ENCODE measurements at regions of chr6 and their contacts with region 1.

Region 1: DNA sequence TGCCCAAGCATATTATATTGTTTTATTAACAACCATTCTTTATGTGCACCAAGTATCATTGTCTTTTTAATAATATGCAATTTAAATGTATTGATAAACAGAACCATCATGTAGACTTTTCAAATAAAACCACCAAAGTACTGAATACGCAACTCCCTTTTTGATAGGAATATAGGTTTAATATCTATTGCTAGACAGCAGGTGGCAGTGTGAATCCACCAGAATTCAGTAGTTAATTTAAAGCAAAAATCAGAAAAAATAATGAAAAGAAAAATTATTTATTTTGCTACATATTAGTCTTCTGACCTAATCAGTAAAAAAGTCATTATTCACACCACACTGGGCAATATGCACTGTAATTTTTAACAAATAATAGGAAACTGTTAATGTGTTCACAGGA is 143.7 kb downstream of the KLHL32 start:
- DNase-seq: peak; percentile 49
- H3K4me3 Mint-ChIP-seq: no peak overlapping the region
- H3K27ac Mint-ChIP-seq: no peak overlapping the region
- H3K4me1 Mint-ChIP-seq: no peaks in the 10 kb centered on the region
- H3K27me3 Mint-ChIP-seq: no peaks in the 10 kb centered on the region

Region 2: DNA sequence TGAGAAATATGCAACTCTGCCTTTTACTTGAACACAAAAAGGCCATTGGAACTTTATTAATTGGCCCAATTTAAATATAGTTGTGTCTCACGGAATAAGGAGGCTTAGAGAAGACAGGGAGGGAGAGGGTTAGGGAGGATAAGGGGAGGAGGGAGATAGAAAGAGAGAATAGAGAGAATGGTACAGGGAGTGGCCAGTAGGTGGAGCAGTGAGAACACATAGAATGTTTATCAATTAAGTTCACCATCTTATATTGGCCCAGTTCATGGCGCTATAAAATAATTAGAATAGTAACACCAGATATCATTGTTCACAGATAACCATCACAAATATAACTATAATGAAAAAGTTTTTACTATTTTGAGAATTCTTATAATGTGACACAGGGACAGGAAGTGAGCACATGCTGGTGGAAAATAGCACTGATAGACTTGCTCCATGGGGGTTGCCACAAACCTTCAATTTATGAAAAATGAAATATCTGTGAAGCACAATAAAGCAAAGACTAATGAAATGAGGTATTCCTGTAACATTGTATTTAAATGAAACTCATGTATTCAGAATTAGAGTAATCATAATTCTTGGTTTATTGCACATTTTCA is 1865.0 kb before region 1 on chr6:
- CTCF ChIA-PET with region 1: no interaction called
- intact Hi-C with region 1: loop called (anchors 5 kb)
- DNase-seq: peak; percentile 51
- H3K4me3 Mint-ChIP-seq: no peak overlapping the region
- H3K27ac Mint-ChIP-seq: no peak overlapping the region
- H3K4me1 Mint-ChIP-seq: no peaks in the 10 kb centered on the region
- H3K27me3 Mint-ChIP-seq: no peaks in the 10 kb centered on the region

Region 3: DNA sequence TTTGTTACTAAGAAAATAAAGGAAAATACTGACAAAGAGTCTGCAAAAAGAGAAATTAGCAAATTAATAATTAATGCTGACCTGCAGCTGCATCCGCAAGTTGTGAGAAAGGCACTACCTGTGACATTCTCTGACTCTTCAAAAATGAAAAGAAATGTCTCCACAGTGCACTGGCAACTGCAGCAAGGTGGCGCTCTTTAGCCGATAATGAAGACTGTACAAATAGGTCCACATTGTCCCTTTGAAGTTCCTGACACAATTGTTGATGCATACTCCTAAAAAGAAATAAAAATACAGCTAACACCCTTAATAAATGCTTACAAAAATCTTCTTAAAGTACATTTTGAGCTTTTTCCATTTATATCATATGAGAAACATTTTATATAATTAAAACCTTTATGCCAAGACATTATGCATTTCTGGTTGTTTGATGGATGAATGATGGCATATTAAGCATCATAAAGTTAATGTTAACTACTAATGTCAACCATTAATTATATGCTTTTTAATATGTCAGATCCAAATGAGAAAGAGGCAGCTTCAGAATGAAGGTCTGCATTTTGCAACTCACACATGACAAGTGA is 118.3 kb after region 1 on chr6:
- CTCF ChIA-PET with region 1: no interaction called
- intact Hi-C with region 1: loop called (anchors 1 kb)
- DNase-seq: peak; percentile 81
- H3K4me3 Mint-ChIP-seq: no peak overlapping the region
- H3K27ac Mint-ChIP-seq: no peak overlapping the region
- H3K4me1 Mint-ChIP-seq: no peaks in the 10 kb centered on the region
- H3K27me3 Mint-ChIP-seq: no peaks in the 10 kb centered on the region

Region 4: GRCh38 chr6:97437087-97437486 is 368.9 kb after region 1 on chr6:
- CTCF ChIA-PET with region 1: no interaction called
- intact Hi-C with region 1: loop called (anchors 2 kb)
- DNase-seq: no peak
- H3K4me3 Mint-ChIP-seq: no peak overlapping the region
- H3K27ac Mint-ChIP-seq: no peak overlapping the region
- H3K4me1 Mint-ChIP-seq: no peaks in the 10 kb centered on the region
- H3K27me3 Mint-ChIP-seq: peaks cover 10% of the 10 kb centered on the region

Measured in activated naive CD4-positive, alpha-beta T cell treated with anti-CD3 and anti-CD28 coated beads for 36 hours (primary cell).